ENCODE measurements at regions of chr17 and their contacts with region 1.

Region 1: DNA sequence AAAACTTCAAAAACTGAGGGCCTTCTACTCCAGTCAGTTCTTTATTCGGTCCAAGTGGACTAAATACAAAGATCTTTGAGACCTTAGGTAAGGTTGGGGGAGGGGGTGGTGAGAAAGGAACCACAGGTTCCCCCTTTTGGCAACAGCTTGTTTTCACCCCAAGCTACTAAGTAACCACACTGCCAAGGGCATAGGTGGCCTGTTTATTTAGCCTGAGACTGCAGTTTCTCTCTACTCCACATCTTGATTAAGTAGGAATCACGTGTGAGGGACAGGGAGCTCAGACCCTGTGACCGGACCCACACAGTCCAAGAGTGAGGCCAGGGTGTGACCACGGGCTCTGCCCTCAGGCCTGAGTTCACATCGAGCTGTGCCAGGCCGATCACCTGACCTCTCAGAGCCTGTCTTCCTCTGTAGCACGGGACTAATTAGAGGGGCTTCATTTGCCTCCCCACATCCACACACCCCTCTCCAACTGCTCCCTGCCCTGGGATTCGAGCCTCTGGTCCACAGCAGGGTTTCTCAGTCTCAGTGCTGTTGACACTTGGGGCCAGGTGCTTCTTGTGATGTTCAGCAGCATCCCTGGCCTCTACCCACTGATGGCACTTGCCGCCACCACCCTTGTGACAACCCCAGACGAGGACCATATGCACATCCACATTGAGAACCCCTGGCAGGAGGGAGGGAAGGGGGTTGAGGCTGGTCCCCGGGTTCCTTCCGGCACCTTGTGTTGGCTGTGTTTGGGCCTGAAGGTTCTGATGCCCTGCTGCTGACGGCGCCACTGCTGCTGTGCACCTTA is 17.8 kb downstream of the ST6GALNAC2 start:
- DNase-seq: no peak
- ATAC-seq: peak; percentile 4 to 54 (median 32)
- H3K4me3 ChIP-seq: no peak overlapping the region
- H3K27ac ChIP-seq: no peak overlapping the region
- H3K4me1 ChIP-seq: peaks cover 0 to 30% (median 13%) of the 10 kb centered on the region in 12 donors
- H3K27me3 ChIP-seq: peaks cover 0 to 2% (median 0%) of the 10 kb centered on the region in 9 donors
- CTCF ChIP-seq: no peak
- POLR2A ChIP-seq: no peak

Region 2: GRCh38 chr17:76540381-76541300 is 27.2 kb before region 1 on chr17:
- intact Hi-C with region 1: no loop called
- DNase-seq: peak; percentile 93 to 97 (median 96)
- ATAC-seq: peak; percentile 91 to 97 (median 93)
- H3K4me3 ChIP-seq: peak overlapping the region in 11 of 12 donors; percentile 12 to 53 (median 44)
- H3K27ac ChIP-seq: peak overlapping the region in 11 of 12 donors; percentile 58 to 81 (median 76)
- H3K4me1 ChIP-seq: peaks cover 13 to 82% (median 55%) of the 10 kb centered on the region in 12 donors
- H3K27me3 ChIP-seq: peaks cover 0 to 38% (median 0%) of the 10 kb centered on the region in 9 donors
- CTCF ChIP-seq: peak in 5 of 12 donors; percentile 9 to 55 (median 39)
- POLR2A ChIP-seq: peak in 1 of 2 donors; percentile 48

Region 3: GRCh38 chr17:76614912-76615617 is 47.2 kb after region 1 on chr17:
- intact Hi-C with region 1: loop called in 2 of 10 experiments (anchors 5 to 10 kb)
- DNase-seq: no peak
- ATAC-seq: no peak
- H3K4me3 ChIP-seq: no peak overlapping the region
- H3K27ac ChIP-seq: no peak overlapping the region
- H3K4me1 ChIP-seq: no peaks in the 10 kb centered on the region
- H3K27me3 ChIP-seq: no peaks in the 10 kb centered on the region
- CTCF ChIP-seq: no peak
- POLR2A ChIP-seq: no peak

Region 4: GRCh38 chr17:76623271-76624146 is 55.7 kb after region 1 on chr17:
- intact Hi-C with region 1: loop called in 2 of 10 experiments (anchors 5 to 10 kb)
- DNase-seq: peak; percentile 61 to 90 (median 72)
- ATAC-seq: peak; percentile 47 to 95 (median 90)
- H3K4me3 ChIP-seq: no peak overlapping the region
- H3K27ac ChIP-seq: no peak overlapping the region
- H3K4me1 ChIP-seq: peaks cover 0 to 7% (median 0%) of the 10 kb centered on the region in 12 donors
- H3K27me3 ChIP-seq: no peaks in the 10 kb centered on the region
- CTCF ChIP-seq: peak; percentile 93 to 98 (median 96)
- POLR2A ChIP-seq: no peak

Measured in heart left ventricle (tissue), 16 donors.